ENCODE measurements at regions of chr1 and their contacts with region 1.

Region 1: GRCh38 chr1:167465743-167466142 is 52.6 kb downstream of the CD247 start:
- DNase-seq: no peak

Region 2: GRCh38 chr1:167454894-167455785 is 10.6 kb before region 1 on chr1:
- CTCF ChIA-PET with region 1: no interaction called
- POLR2A ChIA-PET with region 1: interaction called, 16 read pairs
- DNase-seq: peak; percentile 68

Region 3: DNA sequence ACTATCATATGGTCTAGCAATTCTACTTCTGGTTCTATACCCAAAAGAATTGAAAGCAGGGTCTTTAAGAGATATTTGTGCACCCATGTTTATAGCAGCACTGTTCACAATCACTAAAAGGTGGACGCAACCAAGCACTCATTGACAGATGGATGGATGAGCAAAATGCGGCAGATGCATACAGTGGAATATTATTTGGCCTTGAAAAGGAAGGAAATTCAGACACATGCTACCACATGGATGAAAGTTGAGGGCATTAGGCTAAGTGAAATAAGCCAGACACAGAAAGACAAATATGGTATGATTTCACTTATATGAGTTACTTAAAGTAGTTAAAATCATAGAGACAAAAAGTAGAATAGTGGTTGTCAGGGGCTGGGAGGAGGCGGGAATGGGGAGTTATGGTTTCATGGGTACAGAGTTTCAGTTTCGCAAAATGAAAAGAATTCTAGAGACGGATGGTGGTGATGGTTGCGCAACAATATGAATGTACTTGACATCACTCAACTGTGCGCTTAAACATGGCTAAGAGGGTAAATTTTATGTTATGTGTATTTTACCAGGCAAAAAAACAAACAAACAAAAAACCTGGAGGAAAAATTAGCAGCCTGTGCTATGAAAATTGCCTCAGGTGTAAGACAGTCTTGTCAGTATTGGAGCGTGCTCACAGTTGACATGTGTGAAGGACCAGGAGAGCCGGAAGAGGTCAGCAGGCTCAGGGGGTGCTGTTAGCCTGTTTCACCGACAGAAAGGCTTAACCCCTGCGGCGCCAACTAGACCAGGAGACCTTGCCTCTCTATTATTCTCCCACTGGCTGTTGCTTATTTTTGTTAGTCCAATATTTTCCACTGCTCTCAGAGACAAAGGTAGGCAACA is 26.1 kb after region 1 on chr1:
- CTCF ChIA-PET with region 1: no interaction called
- POLR2A ChIA-PET with region 1: no interaction called
- DNase-seq: no peak

Region 4: GRCh38 chr1:167663002-167663772 is 197.4 kb after region 1 on chr1:
- CTCF ChIA-PET with region 1: no interaction called
- POLR2A ChIA-PET with region 1: no interaction called
- DNase-seq: no peak